ENCODE measurements at regions of chrX and their contacts with region 1.

Region 1: GRCh38 chrX:117936168-117936567 is 180.4 kb downstream of the KLHL13 start:
- DNase-seq: no peak
- H3K4me3 Mint-ChIP-seq: no peak overlapping the region
- H3K27ac Mint-ChIP-seq: no peak overlapping the region
- H3K4me1 Mint-ChIP-seq: no peaks in the 10 kb centered on the region
- H3K27me3 Mint-ChIP-seq: no peaks in the 10 kb centered on the region

Region 2: GRCh38 chrX:116897526-116897925 is 1038.6 kb before region 1 on chrX:
- CTCF ChIA-PET with region 1: no interaction called
- POLR2A ChIA-PET with region 1: no interaction called
- intact Hi-C with region 1: loop called (anchors 10 kb)
- DNase-seq: no peak
- H3K4me3 Mint-ChIP-seq: no peak overlapping the region
- H3K27ac Mint-ChIP-seq: no peak overlapping the region
- H3K4me1 Mint-ChIP-seq: no peaks in the 10 kb centered on the region
- H3K27me3 Mint-ChIP-seq: no peaks in the 10 kb centered on the region

Region 3: DNA sequence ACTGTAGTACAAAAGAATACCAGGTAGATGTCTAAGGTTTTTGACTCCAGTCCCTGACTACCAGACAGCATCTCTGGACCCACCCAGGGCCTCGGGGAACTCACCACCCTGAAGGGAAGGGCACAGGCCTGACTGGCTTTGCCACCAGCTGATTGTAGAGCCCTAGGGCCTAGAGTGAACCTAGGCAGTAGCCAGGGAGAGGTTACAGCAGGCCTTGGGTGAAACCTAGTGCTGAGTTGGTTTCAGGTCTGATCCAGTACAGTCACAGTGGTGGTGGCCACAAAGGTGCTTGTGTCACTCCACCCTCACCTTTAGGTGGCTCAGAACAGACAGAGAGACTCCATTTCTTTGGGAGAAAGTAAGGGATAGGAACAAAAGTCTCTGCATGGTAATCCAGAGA is 64.4 kb before region 1 on chrX:
- CTCF ChIA-PET with region 1: no interaction called
- POLR2A ChIA-PET with region 1: no interaction called
- intact Hi-C with region 1: no loop called
- DNase-seq: no peak
- H3K4me3 Mint-ChIP-seq: no peak overlapping the region
- H3K27ac Mint-ChIP-seq: no peak overlapping the region
- H3K4me1 Mint-ChIP-seq: no peaks in the 10 kb centered on the region
- H3K27me3 Mint-ChIP-seq: no peaks in the 10 kb centered on the region

Region 4: GRCh38 chrX:117996918-117997480 is 60.8 kb after region 1 on chrX:
- CTCF ChIA-PET with region 1: no interaction called
- POLR2A ChIA-PET with region 1: no interaction called
- intact Hi-C with region 1: no loop called
- DNase-seq: no peak
- H3K4me3 Mint-ChIP-seq: no peak overlapping the region
- H3K27ac Mint-ChIP-seq: no peak overlapping the region
- H3K4me1 Mint-ChIP-seq: no peaks in the 10 kb centered on the region
- H3K27me3 Mint-ChIP-seq: no peaks in the 10 kb centered on the region

Region 5: DNA sequence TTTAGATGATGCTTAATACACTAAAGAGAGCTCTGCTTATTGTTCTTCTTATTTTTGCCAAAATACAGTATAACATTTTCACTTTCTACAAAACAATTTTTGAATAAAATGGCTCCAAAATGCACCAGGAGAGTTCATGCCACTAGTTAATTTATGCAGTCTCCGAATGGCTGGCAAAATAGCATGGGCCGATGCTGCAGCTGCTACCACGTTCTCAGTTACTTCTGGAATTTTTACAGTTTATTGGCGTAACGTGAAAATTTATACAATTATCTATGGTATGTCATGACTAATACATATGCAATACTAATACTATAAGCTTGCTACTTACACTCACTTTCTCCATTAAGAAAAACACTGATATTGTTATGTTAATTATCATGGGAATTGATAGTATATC is 163.9 kb after region 1 on chrX:
- CTCF ChIA-PET with region 1: no interaction called
- POLR2A ChIA-PET with region 1: no interaction called
- intact Hi-C with region 1: no loop called
- DNase-seq: no peak
- H3K4me3 Mint-ChIP-seq: no peak overlapping the region
- H3K27ac Mint-ChIP-seq: no peak overlapping the region
- H3K4me1 Mint-ChIP-seq: no peaks in the 10 kb centered on the region
- H3K27me3 Mint-ChIP-seq: no peaks in the 10 kb centered on the region

Measured in activated CD4-positive, alpha-beta memory T cell treated with anti-CD3 and anti-CD28 coated beads for 36 hours (primary cell).